ENCODE measurements at regions of chr3 and their contacts with region 1.

Region 1: DNA sequence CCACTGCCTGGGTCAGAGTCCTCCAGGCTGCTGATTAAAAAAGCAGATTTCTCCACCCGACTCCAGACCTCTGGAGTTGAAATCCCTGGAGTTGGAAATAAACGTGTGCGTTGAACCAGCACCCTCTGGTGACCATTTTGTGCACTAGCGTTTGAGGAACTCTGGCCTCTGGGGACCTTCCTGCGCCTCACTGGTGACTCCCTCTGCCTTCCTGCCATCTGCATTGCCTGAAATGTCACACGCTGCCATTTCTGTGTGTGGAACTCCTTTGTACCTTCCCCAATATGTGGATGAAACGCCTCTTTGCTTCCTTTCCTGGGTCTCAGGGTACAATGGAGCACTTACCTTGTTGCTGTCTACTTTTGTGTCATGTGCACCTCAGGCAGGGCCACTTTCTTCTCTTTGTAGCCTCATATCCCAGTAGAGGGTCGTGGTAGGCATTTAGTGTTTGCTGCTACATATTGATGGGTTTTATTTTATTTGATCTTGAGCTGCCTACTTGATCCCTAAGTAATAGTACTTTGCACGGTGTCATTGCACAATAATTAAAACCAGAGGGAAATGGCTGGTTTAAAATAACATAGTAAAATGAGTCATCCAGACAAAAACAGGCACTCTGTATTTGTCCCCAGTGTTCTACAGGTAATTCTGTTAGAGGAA is 56.8 kb downstream of the GPR171 start:
- DNase-seq: peak; percentile 77 to 80
- H3K4me3 ChIP-seq: no peak overlapping the region
- H3K4me3 Mint-ChIP-seq: no peak overlapping the region
- H3K27ac Mint-ChIP-seq: no peak overlapping the region
- H3K4me1 ChIP-seq: peaks cover 32% of the 10 kb centered on the region
- H3K4me1 Mint-ChIP-seq: peaks cover 30% of the 10 kb centered on the region
- H3K27me3 ChIP-seq: no peaks in the 10 kb centered on the region
- H3K27me3 Mint-ChIP-seq: no peaks in the 10 kb centered on the region
- CTCF ChIP-seq: peak; percentile 81 to 88

Region 2: GRCh38 chr3:150787741-150788370 is 358.3 kb before region 1 on chr3:
- CTCF ChIA-PET with region 1: no interaction called
- POLR2A ChIA-PET with region 1: no interaction called
- intact Hi-C with region 1: loop called (anchors 1 kb)
- DNase-seq: peak; percentile 80 to 82
- H3K4me3 ChIP-seq: no peak overlapping the region
- H3K4me3 Mint-ChIP-seq: no peak overlapping the region
- H3K27ac Mint-ChIP-seq: no peak overlapping the region
- H3K4me1 ChIP-seq: no peaks in the 10 kb centered on the region
- H3K4me1 Mint-ChIP-seq: no peaks in the 10 kb centered on the region
- H3K27me3 ChIP-seq: no peaks in the 10 kb centered on the region
- H3K27me3 Mint-ChIP-seq: peaks cover 3% of the 10 kb centered on the region
- CTCF ChIP-seq: peak; percentile 92

Region 3: GRCh38 chr3:151008699-151009098 is 137.5 kb before region 1 on chr3:
- CTCF ChIA-PET with region 1: interaction called, 7 read pairs
- POLR2A ChIA-PET with region 1: no interaction called
- intact Hi-C with region 1: loop called (anchors 1 kb)
- DNase-seq: peak in 1 of 2 experiments; percentile 47
- H3K4me3 ChIP-seq: no peak overlapping the region
- H3K4me3 Mint-ChIP-seq: no peak overlapping the region
- H3K27ac Mint-ChIP-seq: no peak overlapping the region
- H3K4me1 ChIP-seq: no peaks in the 10 kb centered on the region
- H3K4me1 Mint-ChIP-seq: no peaks in the 10 kb centered on the region
- H3K27me3 ChIP-seq: no peaks in the 10 kb centered on the region
- H3K27me3 Mint-ChIP-seq: no peaks in the 10 kb centered on the region
- CTCF ChIP-seq: peak; percentile 17 to 34

Region 4: DNA sequence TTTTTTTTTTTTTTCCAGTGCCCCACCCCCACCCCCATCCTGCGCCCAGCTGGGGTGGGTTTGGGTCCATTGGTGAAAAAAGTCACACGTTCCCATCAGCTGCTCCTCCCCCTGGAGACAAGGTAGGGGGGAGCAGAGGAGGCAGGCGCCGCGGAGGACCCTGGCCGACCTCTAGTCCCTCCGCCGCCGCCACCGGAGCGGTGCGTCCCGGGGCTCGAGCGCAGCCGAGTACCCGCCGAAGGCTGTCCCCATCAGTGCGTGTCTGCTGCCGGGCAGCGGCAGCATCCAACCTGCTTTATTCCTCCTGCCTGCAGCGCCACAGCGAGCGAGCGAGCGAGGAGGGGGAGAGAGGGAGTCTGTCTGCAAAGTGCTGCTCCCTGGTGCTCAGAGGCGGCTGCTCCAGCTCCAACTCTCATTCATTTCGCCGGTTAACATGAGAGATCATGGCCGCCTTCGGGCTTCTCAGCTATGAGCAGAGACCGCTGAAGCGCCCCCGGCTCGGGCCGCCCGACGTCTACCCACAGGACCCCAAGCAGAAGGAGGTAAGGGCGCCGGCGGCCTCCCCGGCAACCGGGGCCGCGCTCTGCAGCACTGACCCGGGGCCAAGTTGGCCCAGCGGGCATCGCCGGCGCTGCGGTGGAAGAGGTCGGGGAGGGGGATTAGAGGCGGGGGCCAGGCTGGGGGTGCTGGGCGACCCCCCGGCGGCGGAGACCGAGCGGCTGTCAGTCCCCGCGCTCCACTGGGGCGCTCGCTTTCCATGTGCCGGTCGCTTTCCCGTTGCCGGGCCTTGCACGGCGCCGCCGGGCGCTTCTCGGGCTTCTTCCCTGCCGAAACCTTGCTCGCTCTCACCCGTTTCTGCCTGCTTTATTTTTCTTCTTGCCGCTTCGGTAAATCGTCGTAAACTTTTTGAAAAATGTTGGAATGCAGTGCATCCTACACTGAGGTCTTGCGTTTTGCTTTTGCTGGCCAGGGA is 59.4 kb before region 1 on chr3:
- CTCF ChIA-PET with region 1: interaction called, 7 read pairs
- POLR2A ChIA-PET with region 1: no interaction called
- intact Hi-C with region 1: loop called (anchors 1 kb)
- DNase-seq: peak; percentile 80 to 88
- H3K4me3 ChIP-seq: peak overlapping the region; percentile 75
- H3K4me3 Mint-ChIP-seq: peak overlapping the region; percentile 86
- H3K27ac Mint-ChIP-seq: peak overlapping the region; percentile 93
- H3K4me1 ChIP-seq: peaks cover 7% of the 10 kb centered on the region; the same call in 1 of the 2 replicates
- H3K4me1 Mint-ChIP-seq: peaks cover 20% of the 10 kb centered on the region
- H3K27me3 ChIP-seq: no peaks in the 10 kb centered on the region
- H3K27me3 Mint-ChIP-seq: no peaks in the 10 kb centered on the region
- CTCF ChIP-seq: peak; percentile 48 to 63